Activated CD4-positive, alpha-beta memory T cell treated with anti-CD3 and anti-CD28 coated beads for 36 hours (primary cell): ENCODE measurements at regions of chr3 and their contacts with region 1.

Region 1: DNA sequence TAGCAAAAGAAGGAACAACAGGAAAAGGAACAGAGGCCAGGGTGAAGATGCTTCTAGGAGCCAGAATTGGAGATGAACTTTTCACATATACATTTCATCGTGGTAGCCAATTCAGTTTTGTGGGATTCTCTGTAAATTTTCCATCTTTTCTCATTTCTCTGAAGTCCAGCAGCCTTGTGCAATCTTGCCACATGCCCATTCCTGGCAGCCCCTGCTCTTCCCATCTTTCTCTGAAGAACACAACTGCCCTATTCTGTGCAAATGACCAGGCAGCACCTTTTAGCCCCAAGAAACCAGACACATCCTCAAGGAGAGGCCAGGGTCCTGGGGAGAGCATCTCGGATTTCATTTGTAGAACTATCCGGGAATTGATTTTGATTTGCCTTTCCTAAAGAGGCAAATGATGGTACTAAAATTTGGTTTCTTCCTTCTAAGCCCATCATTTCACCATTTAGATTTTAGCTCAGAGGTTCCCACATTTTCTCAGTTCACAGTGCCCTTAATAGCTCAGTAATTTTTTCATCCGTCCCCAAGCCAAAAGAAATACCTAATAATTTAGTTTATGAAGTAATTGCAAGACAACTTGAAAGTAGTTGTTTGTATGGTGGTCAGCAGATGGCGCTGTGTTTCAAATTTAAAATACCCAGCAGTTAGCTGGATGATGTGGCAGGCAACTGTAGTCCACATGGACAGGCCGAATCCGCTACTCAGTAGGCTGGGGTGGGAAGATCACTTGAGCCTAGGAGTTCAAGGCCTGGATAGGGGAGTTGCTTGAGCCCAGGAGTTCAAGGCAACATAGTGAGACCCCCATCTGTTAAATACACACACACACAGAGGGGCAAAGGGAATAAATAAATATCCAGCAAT is 61.3 kb upstream of the ACKR4 start:
- DNase-seq: peak; percentile 53
- H3K4me3 Mint-ChIP-seq: no peak overlapping the region
- H3K27ac Mint-ChIP-seq: no peak overlapping the region
- H3K4me1 Mint-ChIP-seq: peaks cover 2% of the 10 kb centered on the region
- H3K27me3 Mint-ChIP-seq: no peaks in the 10 kb centered on the region

Region 2: DNA sequence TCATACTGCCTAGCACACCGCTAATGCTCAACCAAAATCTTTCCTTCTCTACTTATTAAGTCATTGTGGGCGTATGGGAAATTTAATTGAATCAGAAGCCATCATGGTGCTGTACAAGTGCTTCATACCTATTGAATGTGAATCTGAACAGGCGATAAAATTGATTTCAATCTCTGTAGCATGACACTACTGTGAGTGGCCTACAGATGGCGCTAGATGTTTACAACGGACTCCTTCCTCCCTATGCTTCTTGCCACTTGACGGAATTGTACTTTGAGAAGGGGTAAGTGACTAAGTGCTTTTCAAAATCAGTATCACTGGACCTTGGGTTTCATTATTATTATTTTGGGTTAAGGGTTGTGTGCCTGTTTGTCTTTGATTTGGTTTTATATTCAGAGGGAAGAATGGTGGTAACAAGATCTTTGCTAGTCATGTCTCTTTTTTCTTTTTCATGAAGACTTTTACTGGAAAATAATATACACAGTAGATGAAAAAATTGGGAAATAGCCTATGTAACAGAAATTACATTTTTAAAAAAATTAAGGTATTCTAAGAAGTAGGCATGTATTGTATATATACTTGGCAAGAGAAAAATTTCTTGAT is 183.2 kb before region 1 on chr3:
- CTCF ChIA-PET with region 1: interaction called, 4 read pairs
- POLR2A ChIA-PET with region 1: no interaction called
- intact Hi-C with region 1: loop called (anchors 5 kb)
- DNase-seq: peak; percentile 75
- H3K4me3 Mint-ChIP-seq: no peak overlapping the region
- H3K27ac Mint-ChIP-seq: no peak overlapping the region
- H3K4me1 Mint-ChIP-seq: peaks cover 3% of the 10 kb centered on the region
- H3K27me3 Mint-ChIP-seq: peaks cover 2% of the 10 kb centered on the region

Region 3: GRCh38 chr3:132522353-132522752 is 13.5 kb before region 1 on chr3:
- CTCF ChIA-PET with region 1: interaction called, 12 read pairs
- POLR2A ChIA-PET with region 1: no interaction called
- intact Hi-C with region 1: no loop called
- DNase-seq: no peak
- H3K4me3 Mint-ChIP-seq: no peak overlapping the region
- H3K27ac Mint-ChIP-seq: no peak overlapping the region
- H3K4me1 Mint-ChIP-seq: peaks cover 9% of the 10 kb centered on the region
- H3K27me3 Mint-ChIP-seq: no peaks in the 10 kb centered on the region

Region 4: DNA sequence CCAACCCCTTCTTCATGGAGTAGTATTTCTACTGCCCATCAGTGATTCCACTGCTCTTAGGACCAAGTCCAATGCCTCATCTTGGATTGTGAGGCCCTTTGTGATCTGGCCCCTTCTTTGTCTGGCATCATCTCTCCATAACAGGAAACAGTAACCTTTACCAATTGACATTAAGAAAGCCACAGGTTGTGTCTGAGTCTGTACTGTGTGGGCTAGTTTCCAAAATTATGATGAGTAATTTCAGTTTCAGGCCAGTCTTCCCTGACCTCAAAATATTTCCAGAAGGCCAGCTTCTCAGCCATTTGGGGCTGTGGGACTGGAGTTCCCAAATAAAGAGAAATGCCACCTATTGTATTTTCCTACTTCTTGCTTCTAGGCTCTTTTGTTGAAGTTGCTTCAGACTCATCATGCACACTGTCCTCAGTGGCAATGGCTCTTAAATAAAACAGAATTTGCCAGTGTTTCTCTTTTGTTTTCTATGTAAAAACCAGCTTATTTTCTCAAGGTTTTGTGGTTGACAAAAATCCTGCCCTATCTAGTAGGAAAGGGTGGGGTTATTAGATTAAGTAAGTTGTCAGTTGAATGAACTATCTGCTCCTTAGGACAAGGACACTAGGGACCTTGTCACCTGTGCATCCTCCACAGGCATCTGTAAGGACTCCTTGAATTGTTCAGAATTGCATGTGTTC is 14.2 kb after region 1 on chr3:
- CTCF ChIA-PET with region 1: interaction called, 46 read pairs
- POLR2A ChIA-PET with region 1: no interaction called
- intact Hi-C with region 1: no loop called
- DNase-seq: no peak
- H3K4me3 Mint-ChIP-seq: no peak overlapping the region
- H3K27ac Mint-ChIP-seq: peak overlapping the region; percentile 73
- H3K4me1 Mint-ChIP-seq: peaks cover 20% of the 10 kb centered on the region
- H3K27me3 Mint-ChIP-seq: no peaks in the 10 kb centered on the region

Region 5: GRCh38 chr3:132622761-132623160 is 87.0 kb after region 1 on chr3:
- CTCF ChIA-PET with region 1: interaction called, 11 read pairs
- POLR2A ChIA-PET with region 1: no interaction called
- intact Hi-C with region 1: no loop called
- DNase-seq: no peak
- H3K4me3 Mint-ChIP-seq: no peak overlapping the region
- H3K27ac Mint-ChIP-seq: no peak overlapping the region
- H3K4me1 Mint-ChIP-seq: no peaks in the 10 kb centered on the region
- H3K27me3 Mint-ChIP-seq: no peaks in the 10 kb centered on the region

Region 6: GRCh38 chr3:132635052-132635451 is 99.2 kb after region 1 on chr3:
- CTCF ChIA-PET with region 1: interaction called, 172 read pairs
- POLR2A ChIA-PET with region 1: no interaction called
- intact Hi-C with region 1: no loop called
- DNase-seq: no peak
- H3K4me3 Mint-ChIP-seq: no peak overlapping the region
- H3K27ac Mint-ChIP-seq: no peak overlapping the region
- H3K4me1 Mint-ChIP-seq: peaks cover under 1% of the 10 kb centered on the region
- H3K27me3 Mint-ChIP-seq: no peaks in the 10 kb centered on the region

Region 7: GRCh38 chr3:132641837-132642538 is 106.2 kb after region 1 on chr3:
- CTCF ChIA-PET with region 1: interaction called, 172 read pairs
- POLR2A ChIA-PET with region 1: no interaction called
- intact Hi-C with region 1: loop called (anchors 1 kb)
- DNase-seq: no peak
- H3K4me3 Mint-ChIP-seq: no peak overlapping the region
- H3K27ac Mint-ChIP-seq: no peak overlapping the region
- H3K4me1 Mint-ChIP-seq: no peaks in the 10 kb centered on the region
- H3K27me3 Mint-ChIP-seq: no peaks in the 10 kb centered on the region